Endothelial cell of umbilical vein (primary cell): ENCODE measurements at regions of chr1 and their contacts with region 1.

Region 1: GRCh38 chr1:184555665-184556641 is 169.1 kb downstream of the C1orf21 start:
- DNase-seq: no peak
- H3K4me3 ChIP-seq: no peak overlapping the region
- H3K27ac ChIP-seq: no peak overlapping the region
- H3K4me1 ChIP-seq: no peaks in the 10 kb centered on the region
- H3K27me3 ChIP-seq: no peaks in the 10 kb centered on the region
- CTCF ChIP-seq: no peak
- POLR2A ChIP-seq: no peak

Region 2: DNA sequence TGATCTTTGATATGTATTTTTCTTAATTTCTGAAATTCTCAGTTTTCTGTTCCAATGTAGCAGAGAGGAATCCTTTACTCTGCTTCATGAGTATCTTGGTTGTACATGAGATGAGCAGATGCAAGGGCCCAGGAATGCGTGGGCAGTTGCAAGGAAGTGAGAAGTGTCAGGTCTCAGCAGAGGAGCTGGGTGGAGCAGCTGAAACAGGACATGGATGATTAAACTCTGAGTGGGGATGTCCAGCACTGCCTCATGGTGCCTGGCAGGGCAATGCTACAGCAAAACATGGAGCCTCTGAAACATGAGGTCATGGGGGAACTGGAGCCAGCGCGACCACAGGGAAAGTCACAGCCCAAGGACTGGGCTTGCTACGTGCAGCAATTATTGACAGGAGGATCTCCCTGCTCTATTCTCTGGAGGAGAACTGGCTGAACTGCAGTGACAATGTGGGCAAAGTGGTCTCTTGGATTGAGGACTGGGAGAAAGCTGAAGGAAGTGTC is 566.8 kb before region 1 on chr1:
- CTCF ChIA-PET with region 1: no interaction called
- POLR2A ChIA-PET with region 1: no interaction called
- dilution Hi-C with region 1: no loop called
- intact Hi-C with region 1: loop called (anchors 10 kb)
- DNase-seq: no peak
- H3K4me3 ChIP-seq: no peak overlapping the region
- H3K27ac ChIP-seq: no peak overlapping the region
- H3K4me1 ChIP-seq: no peaks in the 10 kb centered on the region
- H3K27me3 ChIP-seq: peaks cover 3 to 9% of the 10 kb centered on the region in 2 experiments
- CTCF ChIP-seq: no peak
- POLR2A ChIP-seq: no peak

Region 3: GRCh38 chr1:184379111-184379946 is 176.6 kb before region 1 on chr1:
- CTCF ChIA-PET with region 1: no interaction called
- POLR2A ChIA-PET with region 1: no interaction called
- dilution Hi-C with region 1: no loop called
- intact Hi-C with region 1: no loop called
- DNase-seq: no peak
- H3K4me3 ChIP-seq: no peak overlapping the region
- H3K27ac ChIP-seq: no peak overlapping the region
- H3K4me1 ChIP-seq: no peaks in the 10 kb centered on the region
- H3K27me3 ChIP-seq: peaks cover 13% of the 10 kb centered on the region in 2 experiments
- CTCF ChIP-seq: no peak
- POLR2A ChIP-seq: no peak